K562 (cell line): ENCODE measurements at regions of chr1 and their contacts with region 1.

Region 1: GRCh38 chr1:63148825-63149645 is 173.3 kb upstream of the FOXD3 start:
- DNase-seq: peak; percentile 22 to 34 (median 28)
- ATAC-seq: peak; percentile 78
- H3K4me3 ChIP-seq: no peak overlapping the region
- H3K27ac ChIP-seq: no peak overlapping the region
- H3K4me1 ChIP-seq: no peaks in the 10 kb centered on the region
- H3K27me3 ChIP-seq: no peaks in the 10 kb centered on the region
- CTCF ChIP-seq: peak; percentile 48 to 66 (median 61)
- EP300 ChIP-seq: no peak
- POLR2A ChIP-seq: no peak
- RAD21 ChIP-seq: peak in 1 of 2 experiments; percentile 68; a peak in 2 of 4 replicates

Region 2: GRCh38 chr1:62926681-62927252 is 222.3 kb before region 1 on chr1:
- CTCF ChIA-PET with region 1: no interaction called
- POLR2A ChIA-PET with region 1: no interaction called
- in situ Hi-C with region 1: no loop called
- intact Hi-C with region 1: no loop called
- DNase-seq: no peak
- ATAC-seq: no peak
- H3K4me3 ChIP-seq: no peak overlapping the region
- H3K27ac ChIP-seq: no peak overlapping the region
- H3K4me1 ChIP-seq: no peaks in the 10 kb centered on the region
- H3K27me3 ChIP-seq: peaks cover 14 to 17% of the 10 kb centered on the region in 2 experiments; a peak in 4 of 5 replicates
- CTCF ChIP-seq: peak in 1 of 3 experiments; percentile 27; a peak in 2 of 6 replicates
- EP300 ChIP-seq: no peak
- POLR2A ChIP-seq: no peak
- RAD21 ChIP-seq: no peak

Region 3: GRCh38 chr1:62962901-62963776 is 185.9 kb before region 1 on chr1:
- CTCF ChIA-PET with region 1: no interaction called
- POLR2A ChIA-PET with region 1: no interaction called
- in situ Hi-C with region 1: no loop called
- intact Hi-C with region 1: loop called (anchors 10 kb)
- DNase-seq: peak; percentile 32 to 59 (median 47)
- ATAC-seq: peak; percentile 96
- H3K4me3 ChIP-seq: no peak overlapping the region
- H3K27ac ChIP-seq: no peak overlapping the region
- H3K4me1 ChIP-seq: 0 out of 5 replicates have a peak, but pooled peaks cover 0 to 2% of the 10 kb centered on the region in 2 experiments
- H3K27me3 ChIP-seq: peaks cover 3 to 32% of the 10 kb centered on the region in 2 experiments; a peak in 3 of 5 replicates
- CTCF ChIP-seq: peak; percentile 59 to 75 (median 63)
- EP300 ChIP-seq: no peak
- POLR2A ChIP-seq: no peak
- RAD21 ChIP-seq: peak; percentile 29 to 69